ENCODE measurements at regions of chr5 and their contacts with region 1.

Region 1: GRCh38 chr5:177434437-177434836 is 8.0 kb downstream of the GRK6 start:
- DNase-seq: no peak
- H3K4me3 Mint-ChIP-seq: peak overlapping the region; percentile 51
- H3K27ac Mint-ChIP-seq: peak overlapping the region; percentile 83
- H3K4me1 Mint-ChIP-seq: peaks cover 46% of the 10 kb centered on the region
- H3K27me3 Mint-ChIP-seq: no peaks in the 10 kb centered on the region

Region 2: DNA sequence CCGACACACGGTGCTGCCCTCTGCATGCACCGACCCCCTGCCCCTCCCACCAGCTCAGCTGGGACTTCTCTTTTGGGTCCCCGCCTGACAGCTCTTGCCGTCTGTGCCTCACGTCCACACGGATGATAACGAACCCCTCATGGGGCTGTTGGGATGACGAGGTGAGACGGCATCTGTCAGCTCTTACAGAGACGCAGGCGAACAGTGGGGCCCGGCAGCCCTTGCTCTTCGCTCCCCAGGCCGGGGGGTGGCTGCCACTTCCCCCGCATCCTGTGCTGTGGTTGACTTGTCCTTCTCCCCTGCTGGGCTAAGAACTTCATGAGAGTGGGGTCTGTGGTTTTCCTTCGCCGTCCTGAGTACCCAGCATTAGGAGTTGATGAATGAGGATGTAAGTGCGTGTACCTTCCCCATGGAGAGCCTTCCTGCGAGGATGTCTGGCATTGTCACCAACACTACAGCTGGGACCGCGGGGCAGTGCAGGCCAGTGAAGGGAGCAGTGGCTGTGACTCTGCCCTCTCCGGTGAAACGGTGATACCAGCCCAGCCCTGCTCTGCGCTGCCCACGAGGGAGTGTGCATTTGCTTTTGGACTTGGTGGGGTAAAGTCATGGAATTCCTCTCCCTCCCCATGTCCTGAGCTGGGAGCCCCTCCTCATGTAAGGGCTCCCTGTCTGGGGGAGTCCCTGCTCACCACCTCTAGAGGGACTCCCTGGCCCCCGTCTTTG is 558.5 kb before region 1 on chr5:
- intact Hi-C with region 1: no loop called
- DNase-seq: no peak
- H3K4me3 Mint-ChIP-seq: no peak overlapping the region
- H3K27ac Mint-ChIP-seq: no peak overlapping the region
- H3K4me1 Mint-ChIP-seq: no peaks in the 10 kb centered on the region
- H3K27me3 Mint-ChIP-seq: peaks cover 19% of the 10 kb centered on the region

Region 3: DNA sequence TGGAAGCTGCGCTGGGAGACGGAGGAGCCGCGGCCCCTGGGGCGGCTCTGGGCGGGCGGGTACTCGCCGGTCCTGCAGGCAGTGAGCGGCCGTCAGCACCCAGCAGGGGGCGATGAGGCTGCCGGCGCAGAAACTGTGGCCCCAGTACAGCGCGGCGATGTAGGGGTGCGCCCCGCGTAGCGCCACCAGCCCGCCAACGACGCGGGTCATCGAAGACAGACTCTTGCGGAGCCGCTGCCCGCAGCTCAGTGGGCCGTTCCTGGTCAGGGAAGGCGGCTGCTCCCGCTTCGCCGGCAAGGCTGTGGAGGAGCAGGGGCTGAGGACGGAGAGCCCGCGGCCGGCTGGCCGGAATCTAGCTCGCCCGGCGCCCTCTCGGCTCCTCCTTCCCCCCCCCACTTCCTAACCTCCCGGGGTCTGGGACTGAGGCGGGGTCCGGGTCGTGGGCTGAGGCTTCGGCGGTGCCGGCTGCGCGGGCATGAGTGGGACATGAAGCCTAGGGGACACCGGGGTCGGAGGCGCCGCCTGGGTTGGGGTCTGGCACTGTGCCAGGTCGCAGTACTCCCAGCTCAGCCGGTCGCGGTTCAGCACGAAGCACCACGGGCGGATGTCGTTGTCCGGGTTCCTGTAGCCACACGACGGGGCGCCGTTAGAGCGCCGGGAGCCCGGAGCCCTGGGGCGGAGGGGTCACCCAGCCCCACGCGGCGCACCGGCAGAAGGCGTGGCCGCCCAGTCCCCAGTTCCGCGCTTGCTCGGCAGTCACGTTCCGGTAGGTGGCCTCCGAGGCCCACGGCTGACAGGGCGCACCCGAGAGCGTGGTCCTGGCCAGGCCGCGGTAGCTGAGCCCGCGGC is 30.4 kb before region 1 on chr5:
- intact Hi-C with region 1: no loop called
- DNase-seq: peak; percentile 81
- H3K4me3 Mint-ChIP-seq: peak overlapping the region; percentile 79
- H3K27ac Mint-ChIP-seq: no peak overlapping the region
- H3K4me1 Mint-ChIP-seq: peaks cover 19% of the 10 kb centered on the region
- H3K27me3 Mint-ChIP-seq: peaks cover 23% of the 10 kb centered on the region

Region 4: GRCh38 chr5:177446200-177447065 is 12.0 kb after region 1 on chr5 and contains the start of gene PRR7:
- intact Hi-C with region 1: loop called (anchors 1 kb)
- DNase-seq: peak; percentile 69
- H3K4me3 Mint-ChIP-seq: peak within 1 kb of the TSS; percentile 73
- H3K27ac Mint-ChIP-seq: peak within 1 kb of the TSS; percentile 88
- H3K4me1 Mint-ChIP-seq: peaks cover 31% of the 10 kb centered on the region
- H3K27me3 Mint-ChIP-seq: peaks cover 2% of the 10 kb centered on the region
- total RNA-seq, gene PRR7: 12.1 and 13.0 TPM in 2 replicates

Region 5: GRCh38 chr5:177497292-177498033 is 63.0 kb after region 1 on chr5 and contains the start of gene PDLIM7:
- intact Hi-C with region 1: no loop called
- DNase-seq: peak; percentile 93
- H3K4me3 Mint-ChIP-seq: peak within 1 kb of the TSS; percentile 86
- H3K27ac Mint-ChIP-seq: peak within 1 kb of the TSS; percentile 62
- H3K4me1 Mint-ChIP-seq: peaks cover 23% of the 10 kb centered on the region
- H3K27me3 Mint-ChIP-seq: peaks cover 18% of the 10 kb centered on the region
- total RNA-seq, gene PDLIM7: 85.4 and 86.9 TPM in 2 replicates

Measured in activated T-helper 2 cell treated with anti-CD3 and anti-CD28 coated beads, Interferon-gamma antibody, Interleukin-2, Interleukin-4, amounts not matched to agents 10 μg/mL and 5 μg/mL and 100 μg/mL, durations not matched to agents 14 hours and 24 hours and 36 hours (primary cell).